ENCODE measurements at regions of chr3 and their contacts with region 1.

Region 1: DNA sequence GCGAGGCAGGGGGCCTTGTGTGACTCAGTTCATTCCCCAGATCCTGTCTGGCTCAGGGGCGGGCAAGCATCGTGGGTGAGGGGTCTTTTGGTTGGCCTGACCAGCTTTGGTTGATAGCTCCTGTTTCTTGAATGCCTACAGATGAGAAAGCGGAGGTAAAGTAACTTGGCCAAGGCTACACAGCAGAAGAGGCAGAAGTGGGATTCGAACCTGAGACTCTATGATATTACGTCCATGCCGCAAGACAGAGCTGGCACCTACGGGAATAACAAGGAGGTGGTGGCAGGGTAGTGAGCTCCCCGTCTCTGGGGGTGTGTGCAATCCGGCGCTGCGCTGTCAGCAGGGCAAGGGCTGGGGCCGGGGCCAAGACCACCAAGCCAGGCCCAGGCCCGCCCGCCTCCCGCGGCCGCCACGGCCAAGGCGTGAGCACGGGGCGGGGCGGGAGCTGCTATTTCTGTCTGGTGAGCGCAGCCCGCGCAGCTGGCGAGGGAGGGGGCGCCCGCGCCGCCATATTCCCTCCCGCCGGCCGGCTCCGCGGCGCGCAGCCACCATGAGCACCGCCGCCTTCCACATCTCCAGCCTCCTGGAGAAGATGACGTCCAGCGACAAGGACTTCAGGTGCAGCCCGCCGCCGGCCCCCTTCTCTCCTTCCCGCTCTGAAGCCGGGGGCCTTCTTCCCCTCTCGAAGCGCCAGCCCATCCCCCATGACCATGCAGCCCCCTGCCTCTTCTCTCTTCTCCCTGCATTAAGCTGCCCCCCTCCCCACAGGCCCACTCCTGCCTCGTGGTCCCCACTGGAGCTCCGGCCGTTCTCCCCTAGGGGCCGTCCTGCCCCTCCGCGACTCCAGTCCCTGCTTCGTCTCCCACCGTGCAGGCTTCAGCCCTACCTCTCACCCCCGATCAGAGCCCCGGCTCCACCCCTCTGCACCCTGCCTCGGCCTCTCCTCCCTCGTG is at the start of gene CAND2:
- DNase-seq: peak; percentile 65
- ATAC-seq: peak; percentile 81
- H3K4me3 Mint-ChIP-seq: peak within 1 kb of the TSS; percentile 71
- H3K27ac Mint-ChIP-seq: peak within 1 kb of the TSS; percentile 70
- H3K4me1 Mint-ChIP-seq: peaks cover 16% of the 10 kb centered on the region
- H3K27me3 Mint-ChIP-seq: no peaks in the 10 kb centered on the region
- total RNA-seq, gene CAND2: 2.1 to 2.2 TPM

Region 2: DNA sequence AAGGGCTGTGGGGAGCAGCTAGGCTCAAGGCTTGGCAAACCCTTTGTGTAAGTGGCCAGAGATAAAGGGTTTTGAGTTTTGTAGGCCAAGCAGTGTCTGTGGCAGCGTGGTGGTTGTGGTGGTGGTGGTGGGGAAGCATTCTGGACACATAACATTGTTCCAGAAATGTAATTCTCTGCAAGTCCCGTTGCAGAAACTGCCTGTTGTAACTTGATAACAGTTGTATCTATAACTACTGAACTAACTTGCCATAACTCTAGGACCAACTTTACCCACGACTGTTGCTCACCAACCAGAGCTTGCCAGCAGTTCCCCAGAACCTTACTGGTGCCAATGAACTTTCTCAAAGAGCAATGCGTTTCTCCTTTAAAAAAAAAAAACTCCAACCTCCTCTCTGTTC is 19.3 kb before region 1 on chr3:
- CTCF ChIA-PET with region 1: interaction called, 3 read pairs
- POLR2A ChIA-PET with region 1: interaction called, 4 read pairs
- intact Hi-C with region 1: loop called in 1 of 2 experiments (anchors 2 kb)
- DNase-seq: no peak
- ATAC-seq: no peak
- H3K4me3 Mint-ChIP-seq: no peak overlapping the region
- H3K27ac Mint-ChIP-seq: no peak overlapping the region
- H3K4me1 Mint-ChIP-seq: peaks cover 7% of the 10 kb centered on the region
- H3K27me3 Mint-ChIP-seq: peaks cover 3% of the 10 kb centered on the region

Region 3: DNA sequence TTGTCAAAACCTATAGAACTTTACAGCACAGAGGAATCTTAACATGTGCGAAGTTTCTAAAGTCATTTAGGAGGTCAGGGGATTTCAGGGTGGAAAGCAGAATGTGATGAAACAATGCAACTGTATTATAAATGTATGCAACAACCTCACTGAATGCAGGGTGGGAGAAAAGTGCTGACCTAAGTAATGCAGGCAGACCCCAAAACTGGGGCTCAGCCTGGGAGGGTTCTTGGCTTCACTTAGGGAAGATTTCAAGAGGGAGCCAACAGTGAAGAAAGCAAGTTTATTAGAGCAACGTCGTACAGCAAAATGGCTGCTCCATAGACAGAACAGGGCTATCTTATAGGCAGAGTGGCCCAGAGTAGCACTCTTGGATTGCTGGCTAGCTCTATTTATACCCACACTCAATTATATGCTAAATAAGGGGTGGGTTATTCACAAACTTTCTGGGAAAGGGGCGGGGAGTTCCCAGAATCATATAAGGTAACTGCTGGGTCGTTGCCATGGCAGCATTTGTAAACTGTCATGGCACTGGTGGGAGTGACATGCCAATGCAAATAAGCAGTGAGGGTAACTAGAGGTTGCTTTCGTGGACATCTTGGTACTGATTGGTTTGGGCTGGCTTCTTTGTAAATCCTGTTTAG is 14.2 kb before region 1 on chr3:
- CTCF ChIA-PET with region 1: interaction called, 14 read pairs
- POLR2A ChIA-PET with region 1: interaction called, 4 read pairs
- intact Hi-C with region 1: loop called in 1 of 2 experiments (anchors 2 kb)
- DNase-seq: peak; percentile 37
- ATAC-seq: no peak
- H3K4me3 Mint-ChIP-seq: no peak overlapping the region
- H3K27ac Mint-ChIP-seq: no peak overlapping the region
- H3K4me1 Mint-ChIP-seq: no peaks in the 10 kb centered on the region
- H3K27me3 Mint-ChIP-seq: peaks cover 16% of the 10 kb centered on the region

Measured in activated CD4-positive, alpha-beta T cell treated with anti-CD3 and anti-CD28 coated beads for 36 hours (primary cell).